Upper lobe of right lung (tissue), 1 donor: ENCODE measurements at regions of chr12 and their contacts with region 1.

Region 1: DNA sequence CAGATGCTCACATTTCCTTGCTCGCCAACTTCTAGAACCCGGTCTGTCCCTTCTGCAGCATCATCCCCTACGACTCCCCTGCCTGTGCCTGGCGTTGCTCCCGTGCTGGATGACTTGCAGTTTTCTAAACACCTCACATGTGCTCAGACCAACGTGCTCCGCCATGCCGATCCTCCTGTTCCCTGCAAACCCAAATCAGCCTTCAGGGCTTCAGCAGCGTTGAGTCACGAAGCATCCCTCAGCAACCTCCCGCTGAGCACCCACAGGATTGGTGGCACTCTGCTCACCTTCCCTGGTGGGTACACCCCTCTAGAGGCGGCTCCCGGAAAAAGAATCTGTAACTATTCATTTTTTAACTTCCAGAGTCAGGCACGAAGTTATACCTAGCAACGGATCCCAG is 2.8 kb upstream of the PIWIL1 start:
- DNase-seq: no peak
- ATAC-seq: no peak
- H3K4me3 ChIP-seq: no peak overlapping the region
- H3K27ac ChIP-seq: no peak overlapping the region
- H3K4me1 ChIP-seq: peaks cover 8% of the 10 kb centered on the region
- H3K27me3 ChIP-seq: peaks cover 27% of the 10 kb centered on the region
- CTCF ChIP-seq: no peak

Region 2: GRCh38 chr12:130044991-130045621 is 289.8 kb before region 1 on chr12:
- intact Hi-C with region 1: loop called (anchors 5 kb)
- DNase-seq: no peak
- ATAC-seq: no peak
- H3K4me3 ChIP-seq: no peak overlapping the region
- H3K27ac ChIP-seq: no peak overlapping the region
- H3K4me1 ChIP-seq: no peaks in the 10 kb centered on the region
- H3K27me3 ChIP-seq: peaks cover 55% of the 10 kb centered on the region
- CTCF ChIP-seq: no peak

Region 3: GRCh38 chr12:130281153-130281799 is 53.7 kb before region 1 on chr12:
- intact Hi-C with region 1: no loop called
- DNase-seq: no peak
- ATAC-seq: peak; percentile 83
- H3K4me3 ChIP-seq: no peak overlapping the region
- H3K27ac ChIP-seq: no peak overlapping the region
- H3K4me1 ChIP-seq: no peaks in the 10 kb centered on the region
- H3K27me3 ChIP-seq: no peaks in the 10 kb centered on the region
- CTCF ChIP-seq: peak; percentile 82

Region 4: DNA sequence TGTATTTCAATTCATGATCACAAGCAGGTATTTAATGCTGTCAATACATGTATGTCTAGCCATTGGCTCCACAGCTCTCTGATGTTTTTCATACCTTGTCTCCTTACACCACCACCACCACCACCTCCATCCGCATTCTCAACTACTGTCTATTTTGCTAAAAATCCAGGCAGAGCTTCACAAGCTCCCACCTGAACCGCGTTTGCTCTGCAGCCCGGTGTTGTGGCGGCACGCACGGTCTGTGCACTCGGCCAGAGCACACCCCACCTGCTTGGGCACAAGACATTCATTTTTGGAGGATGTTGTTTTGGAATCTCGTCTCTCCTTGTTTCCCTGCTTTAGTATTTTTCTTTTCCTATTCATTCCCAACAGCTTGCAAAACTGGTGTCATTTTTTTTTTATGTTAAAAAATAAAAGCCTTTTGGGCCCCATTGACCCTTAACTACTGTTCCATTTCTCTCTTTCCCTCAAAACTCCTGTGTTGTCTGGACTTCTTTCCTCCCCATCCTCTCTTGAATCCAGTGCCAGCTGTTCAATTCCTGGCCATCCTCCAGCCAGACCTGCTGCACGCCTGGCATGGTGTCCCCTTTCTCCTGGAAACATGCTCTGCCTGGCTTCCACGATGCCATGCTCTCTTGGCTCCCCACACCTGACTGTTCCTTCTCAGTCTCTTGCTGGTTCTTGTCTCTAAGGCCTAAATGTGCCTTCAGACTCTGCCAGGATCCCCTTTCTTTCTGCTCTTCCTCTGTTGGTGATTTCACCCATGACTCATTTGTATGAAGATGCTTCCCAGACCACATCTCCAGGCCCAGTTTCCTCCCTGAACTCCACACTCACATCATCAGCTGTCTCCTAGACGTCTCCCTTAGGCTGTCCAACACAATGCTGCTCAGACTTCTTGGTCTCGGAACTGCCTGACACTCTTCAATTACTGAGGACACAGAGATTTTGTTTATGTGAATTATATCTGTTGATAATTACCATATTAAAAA is 40.7 kb after region 1 on chr12:
- intact Hi-C with region 1: no loop called
- DNase-seq: no peak
- ATAC-seq: no peak
- H3K4me3 ChIP-seq: no peak overlapping the region
- H3K27ac ChIP-seq: no peak overlapping the region
- H3K4me1 ChIP-seq: no peaks in the 10 kb centered on the region
- H3K27me3 ChIP-seq: peaks cover 41% of the 10 kb centered on the region
- CTCF ChIP-seq: no peak

Region 5: DNA sequence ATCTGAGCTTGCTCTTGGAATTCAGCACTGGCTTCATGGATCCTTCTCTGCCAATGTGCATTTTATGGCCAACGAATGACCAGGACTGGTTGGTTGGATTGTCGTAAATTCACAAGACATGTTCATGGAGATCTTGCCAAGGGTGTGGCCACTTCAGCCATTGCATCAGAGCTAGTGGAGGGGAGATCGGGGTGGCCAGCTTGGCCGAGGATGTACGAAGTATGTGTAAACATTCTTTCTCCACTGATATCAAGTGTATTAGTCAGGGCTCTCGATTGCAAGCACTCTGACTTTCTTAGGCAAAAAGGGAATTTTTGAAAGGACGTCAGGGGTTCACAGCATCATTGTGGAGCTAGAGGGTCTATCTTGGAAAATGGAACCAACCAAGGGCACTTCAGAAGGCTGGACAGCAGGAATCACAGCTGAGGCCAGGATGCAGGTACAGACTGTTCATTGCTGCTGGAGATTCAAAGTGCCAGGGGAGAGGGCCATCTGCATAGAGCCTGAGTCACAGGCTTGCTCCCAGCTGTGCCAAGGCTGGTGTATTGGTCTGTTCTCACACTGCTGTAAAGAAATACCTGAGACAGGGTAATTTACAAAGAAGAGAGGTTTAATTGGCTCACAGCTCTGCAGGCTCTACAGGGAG is 585.9 kb after region 1 on chr12:
- intact Hi-C with region 1: no loop called
- DNase-seq: peak; percentile 89
- ATAC-seq: peak; percentile 76
- H3K4me3 ChIP-seq: no peak overlapping the region
- H3K27ac ChIP-seq: peak overlapping the region; percentile 34
- H3K4me1 ChIP-seq: peaks cover 16% of the 10 kb centered on the region
- H3K27me3 ChIP-seq: no peaks in the 10 kb centered on the region
- CTCF ChIP-seq: no peak